ENCODE measurements at regions of chr16 and their contacts with region 1.

Region 1: DNA sequence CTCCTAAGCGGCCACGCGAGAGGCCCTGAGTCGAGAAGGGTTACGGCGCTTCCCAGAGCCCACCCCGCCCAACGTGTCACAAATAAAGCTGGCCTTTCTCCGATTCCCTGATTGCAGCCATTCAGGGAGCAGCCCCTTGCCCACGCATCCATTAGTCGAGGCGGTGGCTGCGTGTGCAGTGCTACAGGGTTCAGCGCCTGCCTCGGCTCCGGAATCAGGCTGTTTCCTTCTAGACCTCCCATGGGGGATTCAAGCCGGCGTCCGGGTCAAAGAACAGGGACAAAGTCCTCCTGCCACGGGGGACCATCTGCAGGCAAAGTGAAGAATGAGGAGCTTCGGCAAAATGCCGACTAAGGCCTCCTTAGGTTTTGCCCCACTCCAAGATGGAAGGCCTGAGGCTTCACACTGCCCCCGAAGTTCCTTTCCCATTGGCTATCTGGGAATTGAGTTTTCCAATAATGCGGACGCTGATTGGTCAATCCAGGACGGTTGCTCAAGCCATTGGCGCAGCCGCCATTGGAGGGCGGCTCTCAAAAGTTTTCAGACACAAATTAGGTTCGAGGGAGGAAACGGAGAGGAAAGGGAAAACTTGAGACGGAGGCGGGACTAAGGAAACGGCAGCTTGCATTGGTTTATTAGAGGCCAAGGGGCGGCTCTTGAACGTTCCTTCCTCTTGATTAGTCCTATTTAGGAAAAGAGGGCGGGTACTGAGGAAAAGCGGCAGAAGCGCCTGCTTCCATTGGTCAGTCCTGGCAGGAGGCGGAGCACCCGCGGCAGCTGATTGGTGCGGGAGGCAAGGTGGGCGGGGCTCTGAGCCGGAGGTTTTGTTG is 430 bp upstream of the KATNB1 start:
- DNase-seq: peak; percentile 99 to 100
- H3K4me3 ChIP-seq: peak overlapping the region; percentile 82
- H3K4me3 Mint-ChIP-seq: peak overlapping the region; percentile 86
- H3K27ac Mint-ChIP-seq: peak overlapping the region; percentile 87
- H3K4me1 ChIP-seq: peaks cover 11% of the 10 kb centered on the region
- H3K4me1 Mint-ChIP-seq: peaks cover 13% of the 10 kb centered on the region
- H3K27me3 ChIP-seq: no peaks in the 10 kb centered on the region
- H3K27me3 Mint-ChIP-seq: no peaks in the 10 kb centered on the region
- CTCF ChIP-seq: no peak

Region 2: GRCh38 chr16:57591086-57591869 is 143.9 kb before region 1 on chr16:
- CTCF ChIA-PET with region 1: interaction called, 26 read pairs
- POLR2A ChIA-PET with region 1: no interaction called
- intact Hi-C with region 1: loop called (anchors 1 kb)
- DNase-seq: peak; percentile 78 to 89
- H3K4me3 ChIP-seq: no peak overlapping the region
- H3K4me3 Mint-ChIP-seq: no peak overlapping the region
- H3K27ac Mint-ChIP-seq: peak overlapping the region; percentile 29
- H3K4me1 ChIP-seq: peaks cover 10% of the 10 kb centered on the region
- H3K4me1 Mint-ChIP-seq: peaks cover 8% of the 10 kb centered on the region
- H3K27me3 ChIP-seq: no peaks in the 10 kb centered on the region
- H3K27me3 Mint-ChIP-seq: no peaks in the 10 kb centered on the region
- CTCF ChIP-seq: peak; percentile 97

Region 3: DNA sequence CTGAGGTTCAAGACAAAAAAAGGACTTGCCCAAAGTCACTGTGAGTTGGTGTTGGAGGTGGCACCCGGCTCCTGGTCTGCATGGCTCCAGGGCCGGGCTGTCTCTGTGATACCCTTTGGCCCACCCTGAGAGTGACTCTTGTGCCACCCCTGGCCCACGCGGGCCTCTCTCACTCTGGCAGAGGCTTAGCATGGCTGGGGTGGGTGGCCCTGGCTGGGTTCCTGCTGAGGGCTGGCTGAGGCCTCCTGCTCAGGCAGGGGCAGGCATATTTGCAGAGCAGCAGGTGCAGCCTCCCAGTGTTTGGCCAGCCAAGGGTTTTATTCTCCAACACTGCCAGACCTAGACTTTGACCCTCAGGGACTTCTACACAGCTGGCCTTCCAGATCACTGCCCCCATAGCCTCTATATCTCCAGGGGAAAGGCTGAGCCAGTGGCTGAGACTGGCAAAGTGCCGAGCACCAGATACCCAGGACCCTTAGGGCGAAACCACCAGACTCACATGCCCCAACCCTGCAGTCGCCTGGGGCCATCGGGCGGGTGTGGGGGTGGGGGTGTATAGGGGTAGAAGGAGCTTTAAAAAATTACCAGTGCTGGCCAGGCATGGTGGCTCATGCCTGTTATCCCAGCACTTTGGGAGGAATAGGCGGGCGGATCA is 128.2 kb before region 1 on chr16:
- CTCF ChIA-PET with region 1: interaction called, 4 read pairs
- POLR2A ChIA-PET with region 1: interaction called, 3 read pairs
- intact Hi-C with region 1: loop called (anchors 1 kb)
- DNase-seq: peak; percentile 87 to 90
- H3K4me3 ChIP-seq: peak overlapping the region; percentile 28
- H3K4me3 Mint-ChIP-seq: peak overlapping the region; percentile 47
- H3K27ac Mint-ChIP-seq: peak overlapping the region; percentile 82
- H3K4me1 ChIP-seq: peaks cover 34% of the 10 kb centered on the region
- H3K4me1 Mint-ChIP-seq: peaks cover 6% of the 10 kb centered on the region
- H3K27me3 ChIP-seq: no peaks in the 10 kb centered on the region
- H3K27me3 Mint-ChIP-seq: no peaks in the 10 kb centered on the region
- CTCF ChIP-seq: no peak

Region 4: GRCh38 chr16:57667526-57668258 is 67.4 kb before region 1 on chr16:
- CTCF ChIA-PET with region 1: interaction called, 6 read pairs
- POLR2A ChIA-PET with region 1: interaction called, 4 read pairs
- intact Hi-C with region 1: loop called (anchors 5 kb)
- DNase-seq: peak in 1 of 2 experiments; percentile 66
- H3K4me3 ChIP-seq: no peak overlapping the region
- H3K4me3 Mint-ChIP-seq: no peak overlapping the region
- H3K27ac Mint-ChIP-seq: no peak overlapping the region
- H3K4me1 ChIP-seq: peaks cover 15% of the 10 kb centered on the region
- H3K4me1 Mint-ChIP-seq: no peaks in the 10 kb centered on the region
- H3K27me3 ChIP-seq: no peaks in the 10 kb centered on the region
- H3K27me3 Mint-ChIP-seq: no peaks in the 10 kb centered on the region
- CTCF ChIP-seq: peak in 1 of 2 experiments; percentile 41

Region 5: GRCh38 chr16:57720142-57720575 is 15.0 kb before region 1 on chr16:
- CTCF ChIA-PET with region 1: interaction called, 11 read pairs
- POLR2A ChIA-PET with region 1: no interaction called
- intact Hi-C with region 1: no loop called
- DNase-seq: peak; percentile 80 to 90
- H3K4me3 ChIP-seq: no peak overlapping the region
- H3K4me3 Mint-ChIP-seq: no peak overlapping the region
- H3K27ac Mint-ChIP-seq: no peak overlapping the region
- H3K4me1 ChIP-seq: no peaks in the 10 kb centered on the region
- H3K4me1 Mint-ChIP-seq: no peaks in the 10 kb centered on the region
- H3K27me3 ChIP-seq: no peaks in the 10 kb centered on the region
- H3K27me3 Mint-ChIP-seq: no peaks in the 10 kb centered on the region
- CTCF ChIP-seq: peak; percentile 80 to 95

Measured in Caco-2 (cell line).